Spleen (tissue), 13 donors: ENCODE measurements at regions of chr3 and their contacts with region 1.

Region 1: DNA sequence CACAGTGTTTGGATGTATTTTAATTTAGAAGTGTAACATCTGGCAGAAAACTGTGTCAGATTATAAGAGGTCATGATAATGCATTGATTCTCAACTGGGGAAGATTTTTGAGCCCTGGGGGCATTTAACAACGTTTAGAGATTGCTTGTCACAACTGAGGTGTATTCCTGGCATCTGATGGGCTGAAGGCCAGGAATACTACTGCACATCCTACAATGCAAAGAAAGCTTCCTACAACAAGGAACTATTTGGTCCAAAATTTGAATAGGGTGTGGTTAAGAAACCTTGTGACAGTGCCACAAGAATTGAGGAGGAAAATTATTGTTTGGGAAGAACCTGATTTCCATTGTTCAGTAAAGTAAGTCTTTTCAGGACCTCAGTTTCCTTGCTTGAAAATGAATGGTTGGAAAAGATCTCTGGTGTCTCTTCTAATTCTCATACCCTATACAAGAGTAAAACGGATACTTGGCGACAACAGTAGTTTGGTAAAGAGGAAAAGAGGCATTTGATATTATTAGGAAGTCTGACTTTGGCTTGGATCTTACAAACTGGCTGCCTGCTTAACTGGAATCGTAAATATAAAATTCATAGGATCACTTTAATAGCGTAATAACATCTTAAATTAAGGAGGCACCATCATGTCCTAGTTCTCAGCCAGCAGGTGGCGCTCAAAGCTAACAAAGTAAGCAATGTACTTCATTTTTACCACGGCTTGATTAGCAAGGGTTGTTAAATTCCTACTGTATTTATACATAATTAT is 4.3 kb downstream of the DAZL start:
- DNase-seq: peak; percentile 92
- H3K4me3 ChIP-seq: no peak overlapping the region
- H3K27ac ChIP-seq: no peak overlapping the region
- H3K4me1 ChIP-seq: peaks cover 0 to 8% (median 0%) of the 10 kb centered on the region in 6 donors
- H3K27me3 ChIP-seq: no peaks in the 10 kb centered on the region
- CTCF ChIP-seq: peak; percentile 56 to 88 (median 80)
- POLR2A ChIP-seq: no peak

Region 2: DNA sequence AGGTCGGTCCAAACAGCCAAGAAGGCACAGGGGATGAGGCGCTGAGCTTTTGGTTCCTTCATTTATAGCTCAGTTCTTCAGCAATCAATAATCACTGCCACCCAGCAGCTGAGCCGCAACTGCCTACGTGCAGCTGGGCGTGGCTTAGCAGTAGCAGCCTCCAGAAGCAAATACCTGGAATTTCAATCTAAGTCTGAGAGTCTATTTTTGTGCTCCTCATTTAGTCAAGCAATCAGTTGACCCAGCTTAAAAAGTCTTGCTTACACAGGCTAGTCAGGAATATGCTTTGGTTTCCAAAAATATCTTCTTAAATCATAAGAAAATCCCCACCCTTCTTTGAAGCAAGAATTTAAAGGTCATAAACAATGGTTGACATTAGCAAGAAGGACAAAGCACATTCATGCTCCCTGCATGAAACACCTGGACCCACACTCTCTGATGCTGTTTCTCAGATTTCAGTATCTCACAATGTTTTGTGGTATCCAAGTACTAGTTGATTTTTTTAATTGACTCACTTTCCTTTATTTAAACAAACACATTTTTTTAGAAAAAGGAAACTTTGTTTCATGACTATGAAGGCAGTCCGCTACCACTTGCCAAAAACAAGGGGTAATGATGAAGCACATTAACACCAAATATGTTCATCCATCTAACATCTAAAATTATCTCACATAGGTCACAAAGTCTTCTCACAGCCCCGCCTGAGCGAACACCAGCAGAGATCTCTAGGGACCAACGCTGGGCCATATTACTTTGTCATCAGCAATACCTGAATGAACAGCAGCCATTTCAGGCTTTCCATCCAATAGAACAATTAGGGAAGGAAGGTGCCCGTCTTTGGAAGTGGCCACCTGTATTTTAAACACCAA is 229.9 kb before region 1 on chr3:
- intact Hi-C with region 1: no loop called
- DNase-seq: no peak
- H3K4me3 ChIP-seq: no peak overlapping the region
- H3K27ac ChIP-seq: peak overlapping the region in 7 of 8 donors; percentile 20 to 69 (median 62)
- H3K4me1 ChIP-seq: peaks cover 18 to 74% (median 58%) of the 10 kb centered on the region in 6 donors
- H3K27me3 ChIP-seq: no peaks in the 10 kb centered on the region
- CTCF ChIP-seq: no peak
- POLR2A ChIP-seq: no peak

Region 3: GRCh38 chr3:17032407-17033034 is 431.6 kb after region 1 on chr3:
- intact Hi-C with region 1: loop called (anchors 10 kb)
- DNase-seq: no peak
- H3K4me3 ChIP-seq: no peak overlapping the region
- H3K27ac ChIP-seq: no peak overlapping the region
- H3K4me1 ChIP-seq: peaks cover 0 to 68% (median 32%) of the 10 kb centered on the region in 6 donors
- H3K27me3 ChIP-seq: no peaks in the 10 kb centered on the region
- CTCF ChIP-seq: peak in 9 of 11 experiments; percentile 40 to 78 (median 58)
- POLR2A ChIP-seq: no peak

Region 4: GRCh38 chr3:17233398-17233800 is 632.4 kb after region 1 on chr3:
- intact Hi-C with region 1: loop called (anchors 2 kb)
- DNase-seq: no peak
- H3K4me3 ChIP-seq: no peak overlapping the region
- H3K27ac ChIP-seq: no peak overlapping the region
- H3K4me1 ChIP-seq: peaks cover 0 to 39% (median 13%) of the 10 kb centered on the region in 6 donors
- H3K27me3 ChIP-seq: no peaks in the 10 kb centered on the region
- CTCF ChIP-seq: peak; percentile 55 to 88 (median 76)
- POLR2A ChIP-seq: no peak

Region 5: DNA sequence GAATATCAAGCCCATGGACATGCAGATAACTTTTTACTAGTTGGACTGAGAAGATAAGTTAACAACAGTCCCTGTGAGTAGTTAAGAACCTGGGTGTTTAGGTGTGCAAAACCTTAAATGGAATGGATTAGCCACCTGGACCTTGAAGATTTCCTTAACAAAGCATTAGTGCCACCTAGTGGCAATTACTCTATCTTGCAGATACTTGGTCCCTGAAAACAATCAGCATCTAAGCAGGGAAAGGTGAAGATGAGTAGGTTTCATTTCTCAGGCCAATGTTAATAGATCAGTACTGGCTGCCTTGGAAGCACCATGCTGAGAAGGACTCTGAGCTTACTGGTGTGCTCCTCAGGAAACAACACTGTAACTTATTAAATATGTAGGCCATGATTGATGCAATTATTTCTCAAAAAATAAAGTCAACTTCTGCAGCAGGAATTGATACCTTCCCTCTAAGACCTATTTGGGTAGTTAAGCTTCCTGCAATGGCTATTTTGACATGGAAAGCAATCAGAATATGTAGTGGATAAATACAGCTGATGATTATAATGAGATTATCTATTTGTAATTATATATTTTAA is 812.1 kb after region 1 on chr3:
- intact Hi-C with region 1: loop called (anchors 5 kb)
- DNase-seq: no peak
- H3K4me3 ChIP-seq: no peak overlapping the region
- H3K27ac ChIP-seq: no peak overlapping the region
- H3K4me1 ChIP-seq: no peaks in the 10 kb centered on the region
- H3K27me3 ChIP-seq: no peaks in the 10 kb centered on the region
- CTCF ChIP-seq: peak; percentile 43 to 84 (median 80)
- POLR2A ChIP-seq: no peak